PC-3 (cell line): ENCODE measurements at regions of chr4 and their contacts with region 1.

Region 1: DNA sequence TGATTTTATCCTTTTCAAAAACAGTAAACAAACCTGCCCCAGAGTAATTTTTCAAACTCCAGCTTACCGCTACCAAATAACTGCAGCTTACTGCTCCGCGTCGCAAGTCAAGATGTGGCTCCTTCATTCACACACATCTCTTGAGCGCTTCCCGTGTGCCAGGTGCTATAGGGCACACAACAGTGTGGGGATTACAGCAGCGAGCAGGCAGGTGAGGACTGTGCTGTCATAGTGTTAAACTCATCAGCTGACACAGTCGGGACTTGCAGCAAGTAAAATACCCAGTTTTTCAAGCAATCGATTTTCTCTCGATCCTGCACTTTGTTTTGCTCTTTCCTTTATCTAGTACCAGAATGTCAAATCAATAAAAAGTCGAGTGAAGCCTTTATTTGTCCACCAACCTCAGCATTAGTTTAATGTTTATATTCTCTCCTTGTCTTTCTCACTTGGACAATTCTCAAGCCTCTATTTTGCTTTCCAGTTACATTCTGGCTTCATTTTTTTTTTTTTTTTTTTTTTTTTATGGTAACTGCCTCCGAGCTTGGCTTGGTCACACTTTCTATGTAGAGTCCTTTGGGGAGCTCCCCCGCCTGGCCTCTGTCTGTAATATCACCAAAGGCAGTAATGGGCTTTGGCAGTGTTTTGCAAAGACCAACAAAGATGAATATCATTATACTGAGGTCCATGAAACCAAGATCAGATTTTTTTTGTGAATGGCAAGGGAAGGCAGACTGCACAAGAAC is 8.3 kb upstream of the ASB5 start:
- DNase-seq: peak; percentile 63
- ATAC-seq: peak; percentile 63
- H3K4me3 ChIP-seq: peak overlapping the region; percentile 55
- H3K27ac ChIP-seq: no peak overlapping the region
- H3K4me1 ChIP-seq: peaks cover 27% of the 10 kb centered on the region
- H3K27me3 ChIP-seq: no peaks in the 10 kb centered on the region
- CTCF ChIP-seq: peak; percentile 72

Region 2: DNA sequence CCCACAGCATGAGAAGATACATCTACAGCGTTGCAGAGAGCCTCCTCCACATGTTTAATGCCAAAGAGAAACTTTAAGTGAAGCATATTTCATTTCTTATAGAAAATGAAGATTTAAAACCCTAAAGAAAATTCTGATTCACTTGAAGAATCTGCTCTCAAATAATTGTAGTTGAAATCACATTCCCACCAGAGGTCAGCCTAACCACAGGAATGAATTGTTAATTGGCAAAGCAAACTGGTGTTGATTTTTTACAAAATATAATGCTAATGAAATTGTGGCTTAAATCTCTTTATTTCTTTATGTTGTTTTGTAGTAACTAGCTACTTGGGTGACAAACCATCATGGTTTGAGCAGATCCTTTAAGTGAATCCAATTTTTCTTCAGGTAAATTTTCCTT is 242.8 kb before region 1 on chr4:
- CTCF ChIA-PET with region 1: no interaction called
- POLR2A ChIA-PET with region 1: no interaction called
- intact Hi-C with region 1: loop called (anchors 1 kb)
- DNase-seq: peak; percentile 51
- ATAC-seq: no peak
- H3K4me3 ChIP-seq: no peak overlapping the region
- H3K27ac ChIP-seq: no peak overlapping the region
- H3K4me1 ChIP-seq: no peaks in the 10 kb centered on the region
- H3K27me3 ChIP-seq: no peaks in the 10 kb centered on the region
- CTCF ChIP-seq: peak; percentile 58

Region 3: GRCh38 chr4:176150356-176150682 is 127.0 kb before region 1 on chr4:
- CTCF ChIA-PET with region 1: interaction called, 12 read pairs
- POLR2A ChIA-PET with region 1: no interaction called
- intact Hi-C with region 1: loop called (anchors 1 kb)
- DNase-seq: peak; percentile 47
- ATAC-seq: peak; percentile 60
- H3K4me3 ChIP-seq: no peak overlapping the region
- H3K27ac ChIP-seq: no peak overlapping the region; the same call in 1 of the 2 replicates
- H3K4me1 ChIP-seq: peaks cover 7% of the 10 kb centered on the region; the same call in 1 of the 2 replicates
- H3K27me3 ChIP-seq: no peaks in the 10 kb centered on the region
- CTCF ChIP-seq: peak; percentile 63

Region 4: GRCh38 chr4:176230836-176231235 is 46.5 kb before region 1 on chr4:
- CTCF ChIA-PET with region 1: no interaction called
- POLR2A ChIA-PET with region 1: no interaction called
- intact Hi-C with region 1: no loop called
- DNase-seq: no peak
- ATAC-seq: no peak
- H3K4me3 ChIP-seq: no peak overlapping the region
- H3K27ac ChIP-seq: no peak overlapping the region
- H3K4me1 ChIP-seq: no peaks in the 10 kb centered on the region; the same call in 1 of the 2 replicates
- H3K27me3 ChIP-seq: no peaks in the 10 kb centered on the region
- CTCF ChIP-seq: no peak

Region 5: DNA sequence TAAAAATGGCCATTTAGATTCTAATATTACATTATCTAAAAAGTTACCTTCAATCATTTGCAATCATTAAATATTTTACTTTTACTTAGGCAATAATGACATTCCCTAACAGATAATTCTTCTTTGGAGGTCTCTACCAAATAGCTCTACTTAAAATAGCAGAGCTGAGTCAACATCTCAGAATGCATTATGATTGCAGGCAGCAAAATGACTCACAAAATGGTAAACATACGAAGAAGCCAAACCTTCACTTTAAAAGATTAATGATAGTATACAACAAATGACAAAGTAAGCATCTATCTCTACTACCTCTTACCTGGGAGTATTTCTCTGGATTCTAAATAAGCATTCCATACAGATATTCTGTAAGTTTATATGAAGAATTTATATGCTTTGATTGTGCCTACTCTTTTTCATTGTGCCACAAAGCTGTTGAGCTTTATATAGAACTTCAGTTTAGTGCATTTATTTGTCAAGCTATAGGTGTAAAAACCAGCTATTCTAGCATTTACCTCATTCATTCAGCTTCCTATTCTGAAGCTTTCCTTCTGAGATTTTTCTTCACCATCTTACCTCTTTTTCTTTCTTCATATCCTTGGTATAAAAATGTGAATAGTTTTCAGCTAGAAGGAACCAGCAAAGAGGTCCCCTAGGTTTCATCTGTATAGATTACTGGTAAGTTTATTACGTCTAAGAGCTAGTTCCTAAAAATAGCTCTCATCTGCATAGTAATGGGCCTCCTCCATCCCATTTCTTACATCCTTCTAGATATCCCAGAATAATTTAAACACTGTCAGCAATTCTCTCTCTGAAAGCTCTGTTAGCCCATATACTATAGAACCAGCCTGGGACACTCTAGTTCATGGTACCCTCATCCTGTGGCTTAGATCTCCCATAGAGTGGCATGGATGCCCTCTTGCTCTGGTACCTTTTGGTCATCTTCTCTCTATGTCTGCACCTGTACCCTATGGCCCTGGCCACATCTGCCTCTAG is 25.2 kb after region 1 on chr4:
- CTCF ChIA-PET with region 1: no interaction called
- POLR2A ChIA-PET with region 1: interaction called, 11 read pairs
- intact Hi-C with region 1: no loop called
- DNase-seq: peak; percentile 85
- ATAC-seq: peak; percentile 96
- H3K4me3 ChIP-seq: no peak overlapping the region
- H3K27ac ChIP-seq: peak overlapping the region; percentile 12; the same call in 1 of the 2 replicates
- H3K4me1 ChIP-seq: peaks cover 23% of the 10 kb centered on the region
- H3K27me3 ChIP-seq: no peaks in the 10 kb centered on the region
- CTCF ChIP-seq: no peak

Region 6: GRCh38 chr4:176393306-176394013 is 116.1 kb after region 1 on chr4:
- CTCF ChIA-PET with region 1: no interaction called
- POLR2A ChIA-PET with region 1: no interaction called
- intact Hi-C with region 1: no loop called
- DNase-seq: no peak
- ATAC-seq: no peak
- H3K4me3 ChIP-seq: no peak overlapping the region
- H3K27ac ChIP-seq: no peak overlapping the region
- H3K4me1 ChIP-seq: no peaks in the 10 kb centered on the region
- H3K27me3 ChIP-seq: no peaks in the 10 kb centered on the region
- CTCF ChIP-seq: no peak